CD8-positive, alpha-beta T cell (primary cell): ENCODE measurements at regions of chr7 and their contacts with region 1.

Region 1: DNA sequence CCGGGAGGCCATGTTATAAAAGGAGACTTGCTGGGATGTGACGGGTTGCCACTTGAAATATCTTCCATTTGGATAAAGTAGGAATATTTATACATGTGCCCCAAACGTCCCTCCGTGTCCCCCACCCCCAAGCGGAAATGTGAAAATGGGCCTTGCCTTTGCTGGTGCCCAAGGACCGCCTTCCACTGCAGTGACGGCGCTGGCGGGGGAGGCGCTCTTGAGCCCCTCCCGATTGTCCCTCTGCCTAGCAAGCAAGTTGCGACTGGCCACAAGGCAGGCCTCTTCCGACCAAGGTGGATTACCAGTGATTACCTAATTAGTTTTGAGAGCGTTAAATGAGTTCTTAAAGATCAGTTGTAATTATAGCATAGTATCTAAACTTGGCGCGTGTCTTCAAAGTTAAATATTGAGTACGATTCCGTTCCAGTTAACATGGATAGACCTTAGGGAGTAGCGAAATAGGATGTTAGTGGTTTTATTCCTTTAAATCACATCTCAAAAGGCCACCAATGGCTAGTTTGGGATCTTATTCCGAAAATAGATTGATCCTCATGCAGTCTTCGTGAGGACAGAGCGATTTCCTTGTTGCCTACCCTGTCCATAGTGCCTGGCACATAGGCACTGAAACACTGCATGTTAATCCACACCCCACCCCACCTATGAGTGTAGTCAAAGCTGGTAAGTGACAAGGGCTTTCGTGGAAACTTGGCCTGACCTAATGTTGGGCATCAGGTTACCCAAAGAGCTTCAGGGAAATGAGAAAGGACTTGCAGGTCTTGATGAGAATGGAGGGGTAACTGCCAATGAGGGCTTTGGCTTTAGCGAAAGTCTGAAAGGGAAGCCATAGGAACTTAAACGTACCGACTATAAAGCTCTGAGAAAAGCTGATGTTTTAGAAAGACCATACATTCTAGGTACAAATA is 1.1 kb downstream of the PPIA start:
- DNase-seq: peak; percentile 64 to 92 (median 82)
- ATAC-seq: peak; percentile 61
- H3K4me3 ChIP-seq: peak overlapping the region; percentile 97 to 98
- H3K4me3 Mint-ChIP-seq: peak overlapping the region; percentile 92
- H3K27ac ChIP-seq: peak overlapping the region; percentile 97 to 99
- H3K27ac Mint-ChIP-seq: peak overlapping the region; percentile 96
- H3K4me1 ChIP-seq: peaks cover 22% of the 10 kb centered on the region
- H3K4me1 Mint-ChIP-seq: peaks cover 44% of the 10 kb centered on the region
- H3K27me3 ChIP-seq: no peaks in the 10 kb centered on the region
- H3K27me3 Mint-ChIP-seq: no peaks in the 10 kb centered on the region
- CTCF ChIP-seq: no peak

Region 2: DNA sequence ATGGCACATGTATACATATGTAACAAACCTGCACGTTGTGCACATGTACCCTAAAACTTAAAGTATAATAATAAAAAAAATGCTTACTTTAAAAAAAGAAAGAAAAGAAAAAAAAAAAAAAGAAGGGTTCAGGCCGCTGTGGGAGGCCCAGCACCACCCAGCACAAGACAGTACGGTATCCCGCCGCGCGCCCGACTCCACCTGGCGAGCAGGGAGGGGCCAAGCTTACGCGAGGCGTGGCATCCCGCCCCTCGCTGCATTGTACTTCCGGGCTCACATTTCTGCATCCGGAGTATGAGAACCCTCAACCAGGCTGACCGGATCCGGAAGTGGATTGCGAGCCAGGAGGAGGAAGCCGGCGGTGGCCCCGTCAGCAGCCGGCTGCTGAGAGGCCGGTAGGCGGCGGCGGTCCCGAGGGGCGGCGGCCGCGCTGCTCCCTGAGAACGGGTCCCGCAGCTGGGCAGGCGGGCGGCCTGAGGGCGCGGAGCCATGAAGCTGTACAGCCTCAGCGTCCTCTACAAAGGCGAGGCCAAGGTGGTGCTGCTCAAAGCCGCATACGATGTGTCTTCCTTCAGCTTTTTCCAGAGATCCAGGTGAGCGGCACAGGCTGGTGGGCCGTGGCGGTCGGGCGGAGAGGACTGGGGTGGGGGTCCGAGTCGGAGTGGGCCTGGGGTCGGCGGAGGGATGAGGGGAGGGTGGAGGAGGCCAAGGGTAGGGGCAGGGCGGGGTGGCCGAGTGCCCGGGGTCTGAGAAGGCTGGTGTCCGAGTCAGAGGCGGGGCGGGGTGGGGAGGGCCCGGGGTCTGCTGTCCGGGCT is 596.7 kb before region 1 on chr7 and contains the start of gene YKT6:
- CTCF ChIA-PET with region 1: no interaction called
- POLR2A ChIA-PET with region 1: no interaction called
- intact Hi-C with region 1: loop called in 1 of 2 experiments (anchors 2 kb)
- DNase-seq: peak; percentile 84 to 98 (median 95)
- ATAC-seq: peak; percentile 98
- H3K4me3 ChIP-seq: peak within 1 kb of the TSS; percentile 72 to 97
- H3K4me3 Mint-ChIP-seq: peak within 1 kb of the TSS; percentile 81
- H3K27ac ChIP-seq: peak within 1 kb of the TSS; percentile 65 to 78
- H3K27ac Mint-ChIP-seq: peak within 1 kb of the TSS; percentile 80
- H3K4me1 ChIP-seq: peaks cover 13% of the 10 kb centered on the region
- H3K4me1 Mint-ChIP-seq: peaks cover 34% of the 10 kb centered on the region
- H3K27me3 ChIP-seq: no peaks in the 10 kb centered on the region
- H3K27me3 Mint-ChIP-seq: peaks cover 5% of the 10 kb centered on the region
- CTCF ChIP-seq: peak; percentile 43
- total RNA-seq, gene YKT6: 111 to 114 TPM

Region 3: GRCh38 chr7:44595934-44596635 is 201.5 kb before region 1 on chr7:
- CTCF ChIA-PET with region 1: no interaction called
- POLR2A ChIA-PET with region 1: no interaction called
- intact Hi-C with region 1: no loop called
- DNase-seq: no peak
- ATAC-seq: no peak
- H3K4me3 ChIP-seq: no peak overlapping the region
- H3K4me3 Mint-ChIP-seq: no peak overlapping the region
- H3K27ac ChIP-seq: no peak overlapping the region
- H3K27ac Mint-ChIP-seq: no peak overlapping the region
- H3K4me1 ChIP-seq: no peaks in the 10 kb centered on the region
- H3K4me1 Mint-ChIP-seq: no peaks in the 10 kb centered on the region
- H3K27me3 ChIP-seq: no peaks in the 10 kb centered on the region
- H3K27me3 Mint-ChIP-seq: no peaks in the 10 kb centered on the region
- CTCF ChIP-seq: no peak

Region 4: DNA sequence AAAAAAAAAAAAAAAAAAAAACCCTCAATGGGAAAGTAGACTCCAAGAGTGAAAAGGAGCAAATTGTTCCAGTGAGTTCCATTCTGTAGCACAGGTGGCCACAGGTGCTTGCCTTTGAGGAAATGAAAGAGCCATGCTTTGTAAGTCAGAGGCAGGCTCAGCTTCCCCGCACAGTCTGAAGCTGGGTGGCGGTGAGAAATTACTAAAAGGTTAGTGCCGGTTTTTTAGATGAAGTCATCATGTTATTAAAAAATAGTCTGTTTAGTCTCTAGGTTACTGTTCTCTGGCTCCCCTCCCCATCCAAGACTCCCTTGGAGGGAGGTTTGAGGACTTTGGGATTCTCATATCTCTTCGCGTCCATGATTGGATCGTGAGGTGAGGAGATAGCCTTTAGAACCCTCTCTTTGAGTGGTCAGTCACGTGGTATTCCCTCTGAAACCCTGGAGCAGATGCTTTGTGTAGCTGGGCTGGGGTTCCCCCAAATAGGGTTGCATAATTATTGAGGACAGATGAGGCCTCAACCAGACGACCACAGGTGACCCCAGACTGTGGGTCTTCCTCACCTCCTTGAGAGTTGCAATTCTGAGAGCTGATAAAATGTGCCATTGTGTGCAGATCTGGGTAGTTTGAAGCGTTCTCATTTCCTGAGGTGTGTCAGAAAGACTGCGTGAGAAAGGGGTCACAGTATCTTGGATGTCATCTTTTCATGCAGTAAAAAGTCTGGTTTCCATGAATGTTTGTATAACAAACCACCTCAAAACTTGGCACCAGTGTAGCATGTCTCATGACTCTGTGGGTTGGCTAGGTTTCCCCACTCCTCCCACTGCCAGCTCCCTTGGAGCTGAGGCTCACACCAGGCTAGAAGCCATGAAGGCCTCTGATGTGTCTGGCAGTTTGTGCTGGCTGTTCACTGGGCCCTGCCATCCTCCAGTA is 164.1 kb before region 1 on chr7:
- CTCF ChIA-PET with region 1: interaction called, 3 read pairs
- POLR2A ChIA-PET with region 1: interaction called, 13 read pairs
- intact Hi-C with region 1: loop called in 1 of 2 experiments (anchors 1 kb)
- DNase-seq: peak in 5 of 9 experiments; percentile 50 to 85 (median 77)
- ATAC-seq: peak; percentile 42
- H3K4me3 ChIP-seq: no peak overlapping the region
- H3K4me3 Mint-ChIP-seq: peak overlapping the region; percentile 22
- H3K27ac ChIP-seq: peak overlapping the region; percentile 35 to 74
- H3K27ac Mint-ChIP-seq: peak overlapping the region; percentile 99
- H3K4me1 ChIP-seq: peaks cover 75% of the 10 kb centered on the region
- H3K4me1 Mint-ChIP-seq: peaks cover 83% of the 10 kb centered on the region
- H3K27me3 ChIP-seq: no peaks in the 10 kb centered on the region
- H3K27me3 Mint-ChIP-seq: no peaks in the 10 kb centered on the region
- CTCF ChIP-seq: no peak

Region 5: DNA sequence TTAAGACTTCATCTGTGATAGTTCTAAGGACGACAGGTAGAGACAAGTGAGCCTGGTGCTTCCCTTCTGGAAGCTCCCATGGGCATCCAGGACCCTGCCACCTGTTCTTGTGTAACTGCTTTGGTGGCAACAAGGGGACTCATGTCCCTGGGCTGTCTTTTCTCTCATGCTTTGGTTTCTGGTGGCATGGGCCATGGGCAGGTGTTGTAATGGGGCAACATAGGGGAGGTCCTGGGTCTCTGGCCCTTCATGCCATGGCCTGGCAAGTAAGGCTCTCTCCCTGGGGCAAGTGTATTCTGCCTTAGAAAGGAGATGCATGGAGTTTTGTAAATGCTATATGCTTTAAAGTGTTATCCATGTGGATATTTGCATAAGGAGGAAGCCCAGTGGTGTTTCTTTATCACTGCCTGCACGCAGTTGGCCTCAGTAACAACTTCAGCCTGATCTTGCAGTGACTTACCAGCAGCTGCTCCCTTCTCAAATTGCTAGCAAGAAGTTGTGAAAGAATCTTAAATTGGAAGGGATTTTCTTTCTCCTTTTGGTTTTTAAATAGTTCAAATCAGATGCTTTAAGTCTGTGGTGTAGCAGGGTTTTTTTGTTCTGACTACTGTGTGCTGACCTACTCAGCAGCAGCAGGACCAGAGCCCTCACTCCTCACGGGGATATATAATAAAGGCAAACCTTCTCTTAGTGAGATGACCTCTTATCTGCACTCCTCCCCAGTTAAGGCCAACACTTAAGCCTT is 151.2 kb before region 1 on chr7:
- CTCF ChIA-PET with region 1: no interaction called
- POLR2A ChIA-PET with region 1: no interaction called
- intact Hi-C with region 1: no loop called
- DNase-seq: no peak
- ATAC-seq: no peak
- H3K4me3 ChIP-seq: no peak overlapping the region
- H3K4me3 Mint-ChIP-seq: no peak overlapping the region
- H3K27ac ChIP-seq: no peak overlapping the region
- H3K27ac Mint-ChIP-seq: no peak overlapping the region
- H3K4me1 ChIP-seq: no peaks in the 10 kb centered on the region
- H3K4me1 Mint-ChIP-seq: peaks cover 7% of the 10 kb centered on the region
- H3K27me3 ChIP-seq: no peaks in the 10 kb centered on the region
- H3K27me3 Mint-ChIP-seq: no peaks in the 10 kb centered on the region
- CTCF ChIP-seq: no peak

Region 6: DNA sequence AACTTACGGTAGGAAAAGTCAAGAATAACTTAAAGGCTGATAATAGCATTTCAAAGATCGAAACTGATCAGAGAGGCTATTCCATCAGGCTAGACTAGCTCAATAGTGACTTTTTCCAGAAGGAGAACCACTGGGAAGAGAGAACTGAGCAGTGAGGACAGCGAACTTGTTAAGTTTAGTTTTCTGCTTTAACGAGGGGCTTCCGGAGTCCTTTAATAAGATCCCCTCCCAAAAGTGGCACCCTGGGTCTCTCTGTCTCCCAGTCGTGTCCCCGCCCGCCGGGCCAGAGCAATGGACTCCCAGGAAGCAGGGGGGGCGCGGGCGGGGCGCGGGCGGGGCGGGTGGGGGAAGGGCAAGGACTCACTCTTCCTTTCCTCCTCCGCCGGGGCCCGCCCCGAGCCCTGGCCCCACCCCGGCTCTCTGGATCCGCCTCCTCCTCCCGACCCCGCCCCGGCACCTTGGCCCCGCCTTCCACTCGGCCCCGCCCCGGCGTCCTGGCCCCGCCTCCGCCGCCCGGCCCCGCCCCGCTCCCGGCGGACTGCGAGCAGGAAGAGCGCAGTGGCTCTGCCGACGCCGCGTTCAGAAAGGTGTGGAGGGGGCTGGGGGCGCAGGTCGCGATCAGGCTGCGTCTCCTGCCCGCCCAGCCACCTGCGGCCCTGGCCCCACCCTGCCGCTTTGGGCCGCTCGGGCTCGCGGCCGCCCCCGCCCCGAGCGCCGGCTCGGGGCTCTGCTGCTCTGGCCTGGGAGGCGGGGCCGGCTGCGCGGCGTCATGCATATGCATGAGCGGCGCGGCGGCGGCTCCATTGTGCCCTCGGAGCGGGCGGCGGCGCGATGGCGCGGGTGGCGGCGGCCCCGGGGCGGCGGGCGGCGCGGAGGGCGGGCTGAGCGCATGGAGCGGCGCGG is 49.3 kb before region 1 on chr7 and contains the start of gene ZMIZ2:
- CTCF ChIA-PET with region 1: no interaction called
- POLR2A ChIA-PET with region 1: interaction called, 6 read pairs
- intact Hi-C with region 1: loop called (anchors 1 kb)
- DNase-seq: peak; percentile 84 to 98 (median 92)
- ATAC-seq: peak; percentile 91
- H3K4me3 ChIP-seq: peak within 1 kb of the TSS; percentile 77 to 80
- H3K4me3 Mint-ChIP-seq: peak within 1 kb of the TSS; percentile 79
- H3K27ac ChIP-seq: peak within 1 kb of the TSS; percentile 83
- H3K27ac Mint-ChIP-seq: peak within 1 kb of the TSS; percentile 90
- H3K4me1 ChIP-seq: peaks cover 27% of the 10 kb centered on the region
- H3K4me1 Mint-ChIP-seq: peaks cover 35% of the 10 kb centered on the region
- H3K27me3 ChIP-seq: no peaks in the 10 kb centered on the region
- H3K27me3 Mint-ChIP-seq: no peaks in the 10 kb centered on the region
- CTCF ChIP-seq: no peak
- total RNA-seq, gene ZMIZ2: 67.1 to 71.3 TPM

Region 7: GRCh38 chr7:44885394-44886317 is 88.1 kb after region 1 on chr7 and contains the start of gene PURB:
- CTCF ChIA-PET with region 1: interaction called, 3 read pairs
- POLR2A ChIA-PET with region 1: interaction called, 4 read pairs
- intact Hi-C with region 1: loop called (anchors 1 kb)
- DNase-seq: peak; percentile 94 to 99 (median 97)
- ATAC-seq: peak; percentile 86
- H3K4me3 ChIP-seq: peak within 1 kb of the TSS; percentile 64 to 67
- H3K4me3 Mint-ChIP-seq: peak within 1 kb of the TSS; percentile 92
- H3K27ac ChIP-seq: peak within 1 kb of the TSS; percentile 98 to 100
- H3K27ac Mint-ChIP-seq: peak within 1 kb of the TSS; percentile 99
- H3K4me1 ChIP-seq: peaks cover 36% of the 10 kb centered on the region
- H3K4me1 Mint-ChIP-seq: peaks cover 45% of the 10 kb centered on the region
- H3K27me3 ChIP-seq: no peaks in the 10 kb centered on the region
- H3K27me3 Mint-ChIP-seq: no peaks in the 10 kb centered on the region
- CTCF ChIP-seq: no peak
- total RNA-seq, gene PURB: 16.3 to 16.5 TPM